IMR-90 (cell line): ENCODE measurements at regions of chr13 and their contacts with region 1.

Region 1: DNA sequence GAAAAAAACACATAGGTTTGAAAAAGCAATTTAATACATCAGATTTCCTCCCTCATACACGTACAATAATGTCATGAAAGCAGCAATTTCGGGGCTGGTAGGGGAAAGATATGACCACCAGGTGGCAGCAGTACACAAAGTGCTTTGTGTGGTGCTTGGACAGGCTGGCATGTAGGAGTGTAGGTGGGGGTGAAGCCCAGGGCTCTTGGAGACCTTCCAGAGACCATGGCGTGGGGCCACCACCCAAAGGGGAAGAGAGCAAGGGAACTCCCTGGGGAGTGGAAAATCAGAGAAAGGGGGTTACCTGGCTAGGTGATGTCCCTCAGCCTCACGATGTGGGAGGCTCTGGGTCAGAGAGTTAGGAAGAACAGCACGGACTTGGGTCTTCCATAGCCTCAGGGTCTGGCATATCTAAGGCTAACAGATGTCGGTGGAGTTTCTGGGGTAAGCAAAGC is 11.8 kb upstream of the CCNA1 start:
- DNase-seq: peak; percentile 59
- ATAC-seq: peak; percentile 94
- H3K4me3 ChIP-seq: no peak overlapping the region
- H3K27ac ChIP-seq: no peak overlapping the region
- H3K4me1 ChIP-seq: no peaks in the 10 kb centered on the region
- H3K27me3 ChIP-seq: no peaks in the 10 kb centered on the region
- CTCF ChIP-seq: peak; percentile 79
- POLR2A ChIP-seq: no peak
- RAD21 ChIP-seq: peak; percentile 75

Region 2: GRCh38 chr13:36736119-36736726 is 315.8 kb after region 1 on chr13:
- CTCF ChIA-PET with region 1: interaction called, 3 read pairs
- POLR2A ChIA-PET with region 1: no interaction called
- dilution Hi-C with region 1: no loop called
- in situ Hi-C with region 1: no loop called
- intact Hi-C with region 1: loop called (anchors 1 kb)
- DNase-seq: peak; percentile 62
- ATAC-seq: peak; percentile 74
- H3K4me3 ChIP-seq: no peak overlapping the region
- H3K27ac ChIP-seq: no peak overlapping the region
- H3K4me1 ChIP-seq: no peaks in the 10 kb centered on the region
- H3K27me3 ChIP-seq: peaks cover 2% of the 10 kb centered on the region; the same call in 1 of the 2 replicates
- CTCF ChIP-seq: peak; percentile 64
- POLR2A ChIP-seq: no peak
- RAD21 ChIP-seq: peak; percentile 60

Region 3: DNA sequence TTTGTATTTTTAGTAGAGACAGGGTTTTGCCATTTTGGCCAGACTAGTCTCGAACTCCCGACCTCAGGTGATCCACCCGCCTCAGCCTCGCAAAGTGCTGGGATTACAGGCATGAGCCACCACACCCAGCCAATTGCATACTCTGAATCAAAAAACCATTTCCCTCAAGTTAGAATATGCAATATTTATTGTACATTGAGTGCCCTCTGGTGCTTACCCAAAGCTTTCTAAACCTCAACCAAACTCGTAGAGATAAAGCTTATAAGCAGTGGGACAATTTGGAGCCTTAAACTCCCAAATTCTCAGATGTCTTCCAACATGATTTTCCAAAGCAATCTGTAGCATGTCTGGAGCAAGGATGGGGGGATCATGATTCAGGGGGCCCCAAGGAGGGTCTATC is 420.9 kb after region 1 on chr13:
- CTCF ChIA-PET with region 1: no interaction called
- POLR2A ChIA-PET with region 1: no interaction called
- dilution Hi-C with region 1: no loop called
- in situ Hi-C with region 1: no loop called
- intact Hi-C with region 1: loop called (anchors 2 kb)
- DNase-seq: no peak
- ATAC-seq: no peak
- H3K4me3 ChIP-seq: no peak overlapping the region
- H3K27ac ChIP-seq: no peak overlapping the region
- H3K4me1 ChIP-seq: no peaks in the 10 kb centered on the region
- H3K27me3 ChIP-seq: no peaks in the 10 kb centered on the region
- CTCF ChIP-seq: peak; percentile 17; the same call in 1 of the 2 replicates
- POLR2A ChIP-seq: no peak
- RAD21 ChIP-seq: no peak

Region 4: GRCh38 chr13:36981156-36981743 is 560.8 kb after region 1 on chr13:
- CTCF ChIA-PET with region 1: no interaction called
- POLR2A ChIA-PET with region 1: no interaction called
- dilution Hi-C with region 1: no loop called
- in situ Hi-C with region 1: no loop called
- intact Hi-C with region 1: loop called (anchors 1 kb)
- DNase-seq: peak; percentile 79
- ATAC-seq: peak; percentile 56
- H3K4me3 ChIP-seq: no peak overlapping the region
- H3K27ac ChIP-seq: no peak overlapping the region
- H3K4me1 ChIP-seq: peaks cover 9% of the 10 kb centered on the region
- H3K27me3 ChIP-seq: no peaks in the 10 kb centered on the region
- CTCF ChIP-seq: peak; percentile 81
- POLR2A ChIP-seq: no peak
- RAD21 ChIP-seq: peak; percentile 76

Region 5: GRCh38 chr13:37068962-37069361 is 648.5 kb after region 1 on chr13:
- CTCF ChIA-PET with region 1: no interaction called
- POLR2A ChIA-PET with region 1: no interaction called
- dilution Hi-C with region 1: no loop called
- in situ Hi-C with region 1: no loop called
- intact Hi-C with region 1: loop called (anchors 5 kb)
- DNase-seq: peak; percentile 30
- ATAC-seq: peak; percentile 81
- H3K4me3 ChIP-seq: no peak overlapping the region
- H3K27ac ChIP-seq: no peak overlapping the region
- H3K4me1 ChIP-seq: 0 out of 2 replicates have a peak, but pooled peaks cover 3% of the 10 kb centered on the region
- H3K27me3 ChIP-seq: no peaks in the 10 kb centered on the region
- CTCF ChIP-seq: peak; percentile 46
- POLR2A ChIP-seq: no peak
- RAD21 ChIP-seq: peak; percentile 51